ENCODE measurements at regions of chr18 and their contacts with region 1.

Region 1: GRCh38 chr18:39134255-39134654 is 1568.7 kb upstream of the CELF4 start:
- DNase-seq: no peak
- ATAC-seq: no peak
- H3K4me3 ChIP-seq: no peak overlapping the region
- H3K4me3 Mint-ChIP-seq: no peak overlapping the region
- H3K27ac ChIP-seq: no peak overlapping the region
- H3K27ac Mint-ChIP-seq: no peak overlapping the region
- H3K4me1 ChIP-seq: no peaks in the 10 kb centered on the region
- H3K4me1 Mint-ChIP-seq: no peaks in the 10 kb centered on the region
- H3K27me3 ChIP-seq: no peaks in the 10 kb centered on the region
- H3K27me3 Mint-ChIP-seq: no peaks in the 10 kb centered on the region

Region 2: GRCh38 chr18:39198376-39198775 is 64.1 kb after region 1 on chr18:
- CTCF ChIA-PET with region 1: no interaction called
- POLR2A ChIA-PET with region 1: no interaction called
- intact Hi-C with region 1: loop called in 1 of 2 experiments (anchors 10 kb)
- DNase-seq: no peak
- ATAC-seq: no peak
- H3K4me3 ChIP-seq: no peak overlapping the region
- H3K4me3 Mint-ChIP-seq: no peak overlapping the region
- H3K27ac ChIP-seq: no peak overlapping the region
- H3K27ac Mint-ChIP-seq: no peak overlapping the region
- H3K4me1 ChIP-seq: no peaks in the 10 kb centered on the region
- H3K4me1 Mint-ChIP-seq: no peaks in the 10 kb centered on the region
- H3K27me3 ChIP-seq: no peaks in the 10 kb centered on the region
- H3K27me3 Mint-ChIP-seq: no peaks in the 10 kb centered on the region

Region 3: GRCh38 chr18:39215920-39216319 is 81.7 kb after region 1 on chr18:
- CTCF ChIA-PET with region 1: no interaction called
- POLR2A ChIA-PET with region 1: no interaction called
- intact Hi-C with region 1: no loop called
- DNase-seq: no peak
- ATAC-seq: no peak
- H3K4me3 ChIP-seq: no peak overlapping the region
- H3K4me3 Mint-ChIP-seq: peak overlapping the region in 1 of 10 donors; percentile 1
- H3K27ac ChIP-seq: no peak overlapping the region
- H3K27ac Mint-ChIP-seq: no peak overlapping the region
- H3K4me1 ChIP-seq: no peaks in the 10 kb centered on the region
- H3K4me1 Mint-ChIP-seq: no peaks in the 10 kb centered on the region
- H3K27me3 ChIP-seq: no peaks in the 10 kb centered on the region
- H3K27me3 Mint-ChIP-seq: no peaks in the 10 kb centered on the region